ENCODE measurements at regions of chr17 and their contacts with region 1.

Region 1: GRCh38 chr17:57271821-57272220 is 15.5 kb downstream of the MSI2 start:
- DNase-seq: no peak
- H3K4me3 ChIP-seq: no peak overlapping the region
- H3K27ac ChIP-seq: no peak overlapping the region
- H3K4me1 ChIP-seq: no peaks in the 10 kb centered on the region
- H3K27me3 ChIP-seq: no peaks in the 10 kb centered on the region
- CTCF ChIP-seq: no peak
- POLR2A ChIP-seq: no peak

Region 2: DNA sequence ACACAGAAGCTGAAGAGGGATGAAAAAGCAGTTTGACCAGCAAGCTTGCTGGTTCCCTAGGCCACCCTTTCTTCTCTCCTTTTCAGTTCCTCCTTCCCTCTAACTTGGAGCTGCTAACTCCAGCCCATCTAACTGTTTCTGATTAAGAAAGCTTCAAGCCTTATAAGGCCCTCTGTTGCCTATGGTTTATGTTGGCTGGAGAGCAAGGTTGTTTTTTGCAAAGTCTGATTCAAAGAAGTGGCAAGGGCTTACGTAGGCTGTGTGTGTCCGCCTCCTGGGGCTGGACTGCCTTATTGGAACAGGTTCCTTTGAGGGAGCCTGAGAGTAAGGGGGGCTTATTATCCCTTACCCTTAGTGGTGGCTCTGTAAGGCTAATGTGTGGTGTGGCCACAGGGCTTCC is 179.7 kb before region 1 on chr17:
- intact Hi-C with region 1: no loop called
- DNase-seq: peak in 1 of 2 donors; percentile 57
- H3K4me3 ChIP-seq: no peak overlapping the region
- H3K27ac ChIP-seq: peak overlapping the region; percentile 70 to 84
- H3K4me1 ChIP-seq: peaks cover 0 to 11% of the 10 kb centered on the region in 2 donors
- H3K27me3 ChIP-seq: no peaks in the 10 kb centered on the region
- CTCF ChIP-seq: no peak
- POLR2A ChIP-seq: peak; percentile 44 to 57

Region 3: GRCh38 chr17:57432520-57433277 is 160.9 kb after region 1 on chr17:
- intact Hi-C with region 1: loop called (anchors 10 kb)
- DNase-seq: no peak
- H3K4me3 ChIP-seq: no peak overlapping the region
- H3K27ac ChIP-seq: no peak overlapping the region
- H3K4me1 ChIP-seq: no peaks in the 10 kb centered on the region
- H3K27me3 ChIP-seq: no peaks in the 10 kb centered on the region
- CTCF ChIP-seq: no peak
- POLR2A ChIP-seq: no peak

Measured in uterus (tissue), 4 donors.